ENCODE measurements at regions of chr7 and their contacts with region 1.

Region 1: GRCh38 chr7:128909625-128910257 is 768 bp downstream of the KCP start:
- DNase-seq: no peak
- H3K4me3 ChIP-seq: no peak overlapping the region
- H3K27ac ChIP-seq: no peak overlapping the region
- H3K4me1 ChIP-seq: peaks cover 8% of the 10 kb centered on the region
- H3K27me3 ChIP-seq: peaks cover 19% of the 10 kb centered on the region
- CTCF ChIP-seq: no peak

Region 2: GRCh38 chr7:128809363-128809762 is 100.4 kb before region 1 on chr7:
- CTCF ChIA-PET with region 1: no interaction called
- dilution Hi-C with region 1: loop called (anchors 5 kb)
- in situ Hi-C with region 1: no loop called
- intact Hi-C with region 1: no loop called
- DNase-seq: no peak
- H3K4me3 ChIP-seq: no peak overlapping the region
- H3K27ac ChIP-seq: no peak overlapping the region
- H3K4me1 ChIP-seq: no peaks in the 10 kb centered on the region
- H3K27me3 ChIP-seq: no peaks in the 10 kb centered on the region
- CTCF ChIP-seq: no peak